Activated T-helper 1 cell treated with anti-CD3 and anti-CD28 coated beads, Interleukin-12 subunit alpha, Interleukin-12 subunit beta, Interleukin-2, Interleukin-4 antibody, amounts not matched to agents 30 ng/mL and 10 ng/mL and 1 ng/mL, durations not matched to agents 14 hours and 24 hours and 36 hours (primary cell): ENCODE measurements at regions of chr12 and their contacts with region 1.

Region 1: DNA sequence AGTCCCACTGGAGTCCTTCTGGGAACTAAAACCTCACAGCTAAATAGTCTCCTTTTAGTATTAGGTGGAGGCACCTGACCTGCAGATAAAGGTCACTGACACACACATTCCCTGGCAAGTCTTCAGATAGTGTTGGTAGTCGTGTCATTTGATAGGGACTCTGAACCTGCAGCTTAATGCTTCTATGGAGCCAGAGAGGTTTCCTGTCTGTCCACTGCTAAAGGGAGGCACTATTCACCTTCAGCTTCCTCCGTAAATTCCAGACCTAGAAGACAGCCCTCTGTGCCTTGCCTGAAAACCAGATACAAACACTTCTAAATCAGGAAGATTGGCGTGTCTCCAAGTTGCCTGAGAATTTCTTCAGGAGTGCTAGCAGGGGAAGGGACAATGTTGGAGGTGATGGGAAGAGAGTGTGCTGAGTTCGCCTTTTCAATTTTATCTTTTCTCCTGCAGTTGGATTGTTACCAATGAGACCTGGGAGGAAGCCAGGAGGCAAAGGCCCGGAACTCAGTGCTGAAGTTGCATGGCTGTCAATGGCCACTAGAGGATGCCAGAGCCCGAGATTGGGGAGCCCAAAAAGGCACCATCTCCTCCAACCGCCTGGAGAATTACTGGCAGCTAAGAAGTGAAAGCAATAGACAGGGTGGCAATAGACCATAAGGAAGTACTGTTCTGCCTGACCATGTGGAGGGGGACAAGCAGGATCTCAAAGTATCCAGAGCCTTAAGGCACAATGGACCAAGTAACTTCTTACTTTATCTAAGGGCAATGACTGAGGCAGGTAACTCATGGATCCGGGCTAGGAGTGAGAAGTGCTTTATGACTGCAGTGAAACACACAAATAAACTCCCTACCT is 81.6 kb upstream of the SCAF11 start:
- DNase-seq: peak; percentile 42
- H3K4me3 Mint-ChIP-seq: no peak overlapping the region
- H3K27ac Mint-ChIP-seq: no peak overlapping the region
- H3K4me1 Mint-ChIP-seq: peaks cover 11% of the 10 kb centered on the region
- H3K27me3 Mint-ChIP-seq: no peaks in the 10 kb centered on the region

Region 2: DNA sequence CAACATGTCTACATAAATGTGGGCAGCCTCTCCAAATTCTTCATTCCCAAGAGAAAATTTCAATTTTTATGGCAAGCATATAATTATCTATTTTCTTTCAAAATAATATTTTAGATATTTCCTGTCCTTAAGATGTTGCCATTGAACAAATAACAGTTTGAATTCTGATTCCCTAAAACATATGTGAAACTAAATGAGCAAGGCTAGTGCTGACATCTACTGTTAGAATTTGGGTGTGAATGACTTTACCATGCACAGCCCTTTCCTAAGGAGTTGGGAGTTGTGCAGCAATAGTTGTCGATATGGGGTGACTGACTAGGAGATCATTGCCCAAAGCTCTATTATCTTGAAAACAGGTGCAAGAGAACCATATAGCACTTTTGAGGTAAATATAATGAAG is 862.0 kb after region 1 on chr12:
- intact Hi-C with region 1: loop called (anchors 2 kb)
- DNase-seq: no peak
- H3K4me3 Mint-ChIP-seq: no peak overlapping the region
- H3K27ac Mint-ChIP-seq: no peak overlapping the region
- H3K4me1 Mint-ChIP-seq: no peaks in the 10 kb centered on the region
- H3K27me3 Mint-ChIP-seq: peaks cover 25% of the 10 kb centered on the region